Dorsolateral prefrontal cortex (tissue), 120 donors: ENCODE measurements at regions of chr13 and their contacts with region 1.

Region 1: GRCh38 chr13:36736119-36736726 is 62.4 kb downstream of the SERTM1 start:
- DNase-seq: peak in 5 of 10 donors; percentile 30 to 57 (median 42)
- H3K4me3 ChIP-seq: no peak overlapping the region
- H3K27ac ChIP-seq: no peak overlapping the region
- H3K27me3 ChIP-seq: no peaks in the 10 kb centered on the region
- CTCF ChIP-seq: peak; percentile 70 to 96 (median 84)

Region 2: GRCh38 chr13:35978603-35979316 is 757.5 kb before region 1 on chr13:
- intact Hi-C with region 1: loop called in 1 of 2 experiments (anchors 5 kb)
- DNase-seq: peak in 2 of 10 donors; percentile 11 to 38
- H3K4me3 ChIP-seq: peak overlapping the region in 9 of 59 donors; percentile 0 to 31 (median 9)
- H3K27ac ChIP-seq: peak overlapping the region in 54 of 59 donors; percentile 19 to 90 (median 69)
- H3K27me3 ChIP-seq: peaks cover 0 to 4% (median 0%) of the 10 kb centered on the region in 45 donors
- CTCF ChIP-seq: peak; percentile 73 to 95 (median 87)

Region 3: DNA sequence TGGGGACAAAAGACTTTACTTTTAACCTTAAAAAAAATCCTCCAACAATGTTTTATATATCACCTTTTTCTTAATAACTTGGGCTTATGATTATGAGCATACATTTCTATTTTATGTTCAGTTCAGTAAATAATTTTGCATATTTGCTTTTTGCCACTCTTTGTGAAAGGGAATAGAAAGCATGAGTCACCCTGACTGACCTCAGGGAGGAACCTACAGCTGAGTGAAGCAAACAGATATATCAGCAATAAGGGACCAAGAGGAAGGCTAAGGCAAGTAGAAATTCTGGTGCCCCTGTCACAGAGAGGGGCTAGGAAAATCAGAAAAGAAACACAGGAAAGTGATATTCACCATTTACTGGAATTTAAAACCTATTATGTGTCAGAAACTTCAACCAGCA is 484.7 kb before region 1 on chr13:
- intact Hi-C with region 1: no loop called
- DNase-seq: no peak
- H3K4me3 ChIP-seq: no peak overlapping the region
- H3K27ac ChIP-seq: no peak overlapping the region
- H3K27me3 ChIP-seq: peaks cover 0 to 5% (median 0%) of the 10 kb centered on the region in 45 donors
- CTCF ChIP-seq: no peak

Region 4: GRCh38 chr13:36282818-36283445 is 453.3 kb before region 1 on chr13:
- intact Hi-C with region 1: loop called (anchors 5 to 10 kb)
- DNase-seq: no peak
- H3K4me3 ChIP-seq: no peak overlapping the region
- H3K27ac ChIP-seq: no peak overlapping the region
- H3K27me3 ChIP-seq: no peaks in the 10 kb centered on the region
- CTCF ChIP-seq: peak; percentile 65 to 95 (median 85)

Region 5: GRCh38 chr13:36420437-36420891 is 315.8 kb before region 1 on chr13:
- intact Hi-C with region 1: loop called in 1 of 2 experiments (anchors 5 kb)
- DNase-seq: peak; percentile 47 to 84 (median 70)
- H3K4me3 ChIP-seq: peak overlapping the region in 1 of 59 donors; percentile 5
- H3K27ac ChIP-seq: no peak overlapping the region
- H3K27me3 ChIP-seq: peaks cover 0 to 9% (median 0%) of the 10 kb centered on the region in 45 donors
- CTCF ChIP-seq: peak; percentile 78 to 97 (median 88)

Region 6: DNA sequence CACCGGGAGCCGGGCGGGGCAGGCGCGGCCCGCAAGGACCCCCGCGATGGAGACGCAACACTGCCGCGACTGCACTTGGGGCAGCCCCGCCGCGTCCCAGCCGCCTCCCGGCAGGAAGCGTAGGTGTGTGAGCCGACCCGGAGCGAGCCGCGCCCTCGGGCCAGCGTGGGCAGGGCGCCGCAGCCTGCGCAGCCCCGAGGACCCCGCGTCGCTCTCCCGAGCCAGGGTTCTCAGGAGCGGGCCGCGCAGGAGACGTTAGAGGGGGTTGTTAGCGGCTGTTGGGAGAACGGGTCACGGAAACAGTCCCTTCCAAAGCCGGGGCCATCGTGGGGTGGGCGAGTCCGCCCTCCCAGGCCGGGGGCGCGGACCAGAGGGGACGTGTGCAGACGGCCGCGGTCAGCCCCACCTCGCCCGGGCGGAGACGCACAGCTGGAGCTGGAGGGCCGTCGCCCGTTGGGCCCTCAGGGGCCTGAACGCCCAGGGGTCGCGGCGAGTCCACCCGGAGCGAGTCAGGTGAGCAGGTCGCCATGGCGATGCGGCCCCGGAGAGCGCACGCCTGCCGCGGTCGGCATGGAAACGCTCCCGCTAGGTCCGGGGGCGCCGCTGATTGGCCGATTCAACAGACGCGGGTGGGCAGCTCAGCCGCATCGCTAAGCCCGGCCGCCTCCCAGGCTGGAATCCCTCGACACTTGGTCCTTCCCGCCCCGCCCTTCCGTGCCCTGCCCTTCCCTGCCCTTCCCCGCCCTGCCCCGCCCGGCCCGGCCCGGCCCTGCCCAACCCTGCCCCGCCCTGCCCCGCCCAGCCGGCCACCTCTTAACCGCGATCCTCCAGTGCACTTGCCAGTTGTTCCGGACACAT is 304.3 kb before region 1 on chr13 and contains the start of gene CCNA1:
- intact Hi-C with region 1: loop called in 1 of 2 experiments (anchors 10 kb)
- DNase-seq: peak; percentile 34 to 88 (median 68)
- H3K4me3 ChIP-seq: peak within 1 kb of the TSS; percentile 41 to 83 (median 70)
- H3K27ac ChIP-seq: peak within 1 kb of the TSS in 49 of 59 donors; percentile 8 to 89 (median 73)
- H3K27me3 ChIP-seq: peaks cover 0 to 36% (median 8%) of the 10 kb centered on the region in 45 donors
- CTCF ChIP-seq: no peak
- total RNA-seq, gene CCNA1: 3.1 to 15.6 (median 9.5) TPM

Region 7: DNA sequence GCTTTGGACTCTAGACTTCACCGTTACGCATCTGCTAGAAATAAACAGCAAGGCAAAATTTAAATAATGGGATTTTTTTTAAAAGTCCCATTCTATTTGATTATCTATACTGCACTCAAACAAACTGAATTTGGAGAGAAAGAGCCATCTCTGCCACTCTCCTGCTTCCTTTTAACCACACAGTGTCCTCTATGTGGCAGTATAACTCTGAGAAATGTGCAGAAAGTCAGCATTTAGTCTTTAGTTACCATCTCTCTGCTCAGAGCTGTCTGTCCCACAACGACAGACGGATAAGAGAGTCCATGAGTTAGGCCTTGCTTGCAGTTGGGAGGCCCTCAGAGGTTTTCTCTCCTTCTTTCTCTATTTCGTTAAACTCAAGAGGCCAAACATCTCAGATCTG is 282.7 kb before region 1 on chr13:
- intact Hi-C with region 1: loop called in 1 of 2 experiments (anchors 10 kb)
- DNase-seq: no peak
- H3K4me3 ChIP-seq: no peak overlapping the region
- H3K27ac ChIP-seq: no peak overlapping the region
- H3K27me3 ChIP-seq: no peaks in the 10 kb centered on the region
- CTCF ChIP-seq: peak in 54 of 56 donors; percentile 17 to 70 (median 44)